ENCODE measurements at regions of chr7 and their contacts with region 1.

Region 1: GRCh38 chr7:64618785-64619456 is 47.0 kb upstream of the ZNF107 start:
- DNase-seq: no peak
- ATAC-seq: no peak
- H3K4me3 Mint-ChIP-seq: no peak overlapping the region
- H3K27ac Mint-ChIP-seq: no peak overlapping the region
- H3K4me1 Mint-ChIP-seq: no peaks in the 10 kb centered on the region
- H3K27me3 Mint-ChIP-seq: no peaks in the 10 kb centered on the region
- CTCF ChIP-seq: no peak

Region 2: DNA sequence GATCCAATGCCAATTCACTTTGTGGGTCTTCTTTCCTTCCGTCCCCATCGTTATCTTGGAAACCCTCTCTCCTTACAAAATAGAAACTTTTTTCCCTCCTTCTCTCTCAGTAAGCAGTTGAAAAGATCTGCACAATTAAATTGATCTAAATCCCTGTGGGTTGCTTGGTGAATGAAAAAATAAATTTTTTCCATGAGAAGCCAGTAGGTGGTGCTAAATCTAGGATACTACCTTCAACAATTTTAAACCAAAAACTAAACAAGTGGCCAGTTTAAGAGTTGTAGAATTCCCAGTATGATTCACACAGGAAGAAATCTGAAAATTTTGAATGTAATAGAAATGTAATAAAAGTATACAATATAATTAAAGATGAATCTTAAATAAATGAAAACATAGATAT is 1610.6 kb before region 1 on chr7:
- CTCF ChIA-PET with region 1: no interaction called
- POLR2A ChIA-PET with region 1: no interaction called
- intact Hi-C with region 1: loop called (anchors 1 kb)
- DNase-seq: no peak
- ATAC-seq: no peak
- H3K4me3 Mint-ChIP-seq: no peak overlapping the region
- H3K27ac Mint-ChIP-seq: no peak overlapping the region
- H3K4me1 Mint-ChIP-seq: no peaks in the 10 kb centered on the region
- H3K27me3 Mint-ChIP-seq: no peaks in the 10 kb centered on the region
- CTCF ChIP-seq: no peak

Region 3: DNA sequence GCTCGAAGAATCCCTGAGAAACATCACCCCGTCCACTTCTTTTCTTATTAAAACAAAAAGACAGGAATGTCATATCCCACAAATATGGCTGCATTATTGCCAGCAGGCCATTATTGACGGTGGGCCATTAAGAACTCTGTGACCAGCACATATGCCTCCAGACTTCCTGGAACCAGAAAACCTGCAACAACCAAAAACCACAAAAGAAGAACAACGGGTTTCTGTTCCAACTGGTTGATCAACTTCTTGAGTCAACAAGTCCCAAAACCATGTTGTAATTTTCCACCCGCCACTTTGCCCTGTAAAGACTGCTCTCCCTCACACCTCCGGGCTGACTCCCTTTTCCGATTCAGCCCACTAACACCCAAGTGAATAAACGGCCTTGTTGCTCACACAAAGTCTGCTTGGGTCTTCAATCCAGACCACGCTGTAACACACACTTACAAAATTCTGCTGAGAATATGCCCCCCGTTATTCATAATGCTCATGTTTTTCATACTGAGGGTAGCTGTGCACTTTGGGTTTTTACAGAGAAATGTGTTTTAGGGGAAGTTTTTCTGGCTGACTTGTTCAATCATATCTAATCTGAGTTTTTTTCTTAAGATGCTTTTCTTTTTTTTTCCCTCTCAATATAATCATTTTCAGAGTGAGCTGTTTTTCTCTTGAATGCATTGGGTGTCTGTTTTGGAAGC is 67.7 kb after region 1 on chr7:
- CTCF ChIA-PET with region 1: no interaction called
- POLR2A ChIA-PET with region 1: no interaction called
- intact Hi-C with region 1: no loop called
- DNase-seq: peak; percentile 29
- ATAC-seq: peak; percentile 84
- H3K4me3 Mint-ChIP-seq: peak overlapping the region; percentile 79
- H3K27ac Mint-ChIP-seq: peak overlapping the region; percentile 99
- H3K4me1 Mint-ChIP-seq: peaks cover 70% of the 10 kb centered on the region
- H3K27me3 Mint-ChIP-seq: no peaks in the 10 kb centered on the region
- CTCF ChIP-seq: no peak

Region 4: GRCh38 chr7:64706625-64707292 is 87.8 kb after region 1 on chr7:
- CTCF ChIA-PET with region 1: no interaction called
- POLR2A ChIA-PET with region 1: no interaction called
- intact Hi-C with region 1: no loop called
- DNase-seq: no peak
- ATAC-seq: no peak
- H3K4me3 Mint-ChIP-seq: no peak overlapping the region
- H3K27ac Mint-ChIP-seq: no peak overlapping the region
- H3K4me1 Mint-ChIP-seq: no peaks in the 10 kb centered on the region
- H3K27me3 Mint-ChIP-seq: no peaks in the 10 kb centered on the region
- CTCF ChIP-seq: no peak